Stomach (tissue), 19 donors: ENCODE measurements at regions of chr1 and their contacts with region 1.

Region 1: DNA sequence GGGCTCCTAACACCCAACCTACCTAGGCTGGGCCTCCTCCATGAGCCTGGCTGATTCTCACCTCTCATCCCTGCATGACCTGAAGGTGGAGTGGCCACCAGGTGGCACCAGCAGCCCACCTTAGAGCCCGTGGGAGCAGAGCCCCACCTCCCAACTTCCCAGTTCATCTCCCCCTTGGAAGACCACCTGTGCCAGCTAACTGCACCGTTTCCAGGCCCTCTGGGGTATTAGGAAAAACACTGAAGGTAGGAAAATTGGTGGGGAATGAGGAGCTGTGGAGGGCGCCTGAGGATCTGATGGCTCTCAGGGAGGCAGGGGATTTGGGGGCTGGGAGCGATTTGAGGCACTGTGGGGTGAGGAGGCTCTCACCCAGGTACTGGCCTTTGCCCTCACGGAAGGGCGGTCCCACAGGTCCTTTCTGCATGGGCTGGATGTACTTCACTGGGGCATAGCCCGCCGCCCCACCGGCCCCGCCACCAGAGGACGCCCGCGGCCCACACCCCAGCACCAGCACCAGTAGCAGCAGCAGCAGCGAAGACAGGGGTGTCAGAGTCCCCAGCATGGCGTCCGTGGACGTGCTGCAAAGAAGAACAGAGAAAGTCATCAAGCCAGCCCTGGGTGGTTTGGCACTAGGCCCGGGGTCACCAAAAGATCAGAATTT is 11.1 kb downstream of the ADPRS start:
- DNase-seq: peak; percentile 83 to 90
- H3K4me3 ChIP-seq: peak overlapping the region in 1 of 4 donors; percentile 4
- H3K27ac ChIP-seq: peak overlapping the region in 3 of 5 donors; percentile 17 to 49 (median 35)
- H3K4me1 ChIP-seq: peaks cover 10 to 33% (median 16%) of the 10 kb centered on the region in 4 donors
- H3K27me3 ChIP-seq: no peaks in the 10 kb centered on the region
- CTCF ChIP-seq: peak in 5 of 7 experiments; percentile 58 to 90 (median 80)
- EP300 ChIP-seq: no peak
- POLR2A ChIP-seq: no peak

Region 2: DNA sequence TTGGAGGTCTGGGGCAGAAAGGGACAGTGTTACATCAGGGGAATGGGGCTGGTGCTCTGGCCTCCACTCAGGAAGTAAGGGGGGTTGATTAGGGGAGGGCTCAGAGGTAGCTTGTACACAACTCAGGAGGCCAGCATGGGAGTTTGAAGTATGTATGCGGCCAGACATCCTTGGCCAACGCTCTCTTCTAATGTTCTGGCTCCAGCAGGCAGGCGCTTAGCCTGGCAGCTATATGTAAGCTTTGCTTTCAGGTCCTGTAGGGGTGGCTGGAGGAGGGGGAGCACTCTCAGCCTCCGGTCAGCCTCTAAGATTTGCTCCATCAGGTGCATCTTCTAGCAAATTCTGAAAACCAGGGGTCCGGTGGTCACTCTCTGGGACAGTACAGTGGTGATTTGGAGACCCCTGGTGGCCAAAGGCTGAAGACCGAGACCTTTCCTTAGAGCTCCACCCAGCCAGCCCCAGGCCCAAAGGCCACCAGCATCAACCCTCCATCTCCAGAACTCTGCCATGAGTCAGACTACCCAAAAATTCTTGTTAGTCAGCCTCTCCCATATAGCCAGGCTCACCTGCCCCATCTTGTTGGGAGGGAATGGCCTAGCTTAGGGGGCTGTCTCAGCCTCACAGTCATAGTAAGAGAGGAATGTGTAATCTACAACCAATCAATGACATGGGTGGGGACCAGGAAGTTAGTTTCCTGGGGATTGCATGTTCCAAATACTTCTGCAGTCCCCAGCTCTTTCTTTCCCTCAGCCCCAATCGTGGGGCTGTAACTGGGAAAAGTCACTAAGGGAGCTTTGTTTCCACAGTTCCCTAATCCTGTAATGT is 34.9 kb after region 1 on chr1:
- intact Hi-C with region 1: loop called (anchors 5 kb)
- DNase-seq: peak; percentile 55 to 81
- H3K4me3 ChIP-seq: no peak overlapping the region
- H3K27ac ChIP-seq: peak overlapping the region in 4 of 5 donors; percentile 12 to 80 (median 64)
- H3K4me1 ChIP-seq: peaks cover 9 to 51% (median 34%) of the 10 kb centered on the region in 4 donors
- H3K27me3 ChIP-seq: no peaks in the 10 kb centered on the region
- CTCF ChIP-seq: peak in 5 of 7 experiments; percentile 48 to 73 (median 69)
- EP300 ChIP-seq: no peak
- POLR2A ChIP-seq: no peak

Region 3: DNA sequence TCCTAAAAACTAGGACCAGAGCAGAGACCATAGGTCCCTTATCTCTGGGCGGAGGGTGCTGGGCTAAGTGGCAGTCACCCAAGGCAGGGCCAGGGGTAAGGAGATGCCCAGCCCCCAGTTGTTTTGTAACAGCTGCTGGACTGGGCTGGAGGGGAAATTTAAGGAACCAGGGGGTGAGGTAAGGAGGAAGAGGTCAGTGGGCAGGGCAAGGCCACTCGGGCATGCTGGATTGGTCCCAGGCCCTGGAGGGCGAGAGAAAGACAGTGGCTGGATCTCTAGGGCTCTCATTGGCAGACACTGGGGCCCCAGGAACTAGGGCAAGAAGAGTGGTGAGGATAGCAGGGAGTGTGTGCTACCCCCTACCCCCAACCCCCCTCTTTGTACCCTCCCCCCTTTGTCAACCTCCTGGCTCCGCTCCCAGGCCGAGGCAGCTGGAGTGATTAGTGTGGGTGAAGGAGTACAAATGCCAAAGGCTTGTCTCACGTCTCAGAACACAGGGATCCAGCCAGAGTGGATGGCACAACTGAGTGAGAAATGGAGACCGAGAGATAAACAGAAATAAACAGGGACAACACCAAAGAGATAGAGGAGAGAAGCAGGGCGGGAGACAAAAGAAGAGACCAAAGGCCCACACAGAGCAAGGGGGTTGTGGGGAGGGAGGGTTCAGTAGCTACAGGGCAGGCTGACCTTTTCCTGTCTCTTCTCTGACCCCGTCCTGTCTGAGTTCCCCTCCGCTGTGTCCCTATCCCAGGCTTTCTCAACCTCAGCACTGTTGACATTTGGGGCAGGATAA is 103.9 kb after region 1 on chr1:
- intact Hi-C with region 1: no loop called
- DNase-seq: peak; percentile 65 to 68
- H3K4me3 ChIP-seq: no peak overlapping the region
- H3K27ac ChIP-seq: peak overlapping the region; percentile 39 to 82 (median 76)
- H3K4me1 ChIP-seq: peaks cover 35 to 74% (median 61%) of the 10 kb centered on the region in 4 donors
- H3K27me3 ChIP-seq: no peaks in the 10 kb centered on the region
- CTCF ChIP-seq: no peak
- EP300 ChIP-seq: no peak
- POLR2A ChIP-seq: no peak

Region 4: GRCh38 chr1:36411674-36412520 is 312.1 kb after region 1 on chr1:
- intact Hi-C with region 1: loop called (anchors 10 kb)
- DNase-seq: peak in 1 of 2 donors; percentile 28
- H3K4me3 ChIP-seq: no peak overlapping the region
- H3K27ac ChIP-seq: no peak overlapping the region
- H3K4me1 ChIP-seq: no peaks in the 10 kb centered on the region
- H3K27me3 ChIP-seq: no peaks in the 10 kb centered on the region
- CTCF ChIP-seq: no peak
- EP300 ChIP-seq: no peak
- POLR2A ChIP-seq: no peak